ENCODE measurements at regions of chr11 and their contacts with region 1.

Region 1: GRCh38 chr11:72413914-72414628 is 20.3 kb downstream of the CLPB start:
- DNase-seq: peak; percentile 47 to 81 (median 75)
- ATAC-seq: peak; percentile 81
- H3K4me3 ChIP-seq: no peak overlapping the region
- H3K4me3 Mint-ChIP-seq: no peak overlapping the region
- H3K27ac ChIP-seq: no peak overlapping the region
- H3K27ac Mint-ChIP-seq: no peak overlapping the region
- H3K4me1 ChIP-seq: no peaks in the 10 kb centered on the region
- H3K4me1 Mint-ChIP-seq: peaks cover 28% of the 10 kb centered on the region
- H3K27me3 ChIP-seq: no peaks in the 10 kb centered on the region
- H3K27me3 Mint-ChIP-seq: no peaks in the 10 kb centered on the region
- CTCF ChIP-seq: peak; percentile 74

Region 2: DNA sequence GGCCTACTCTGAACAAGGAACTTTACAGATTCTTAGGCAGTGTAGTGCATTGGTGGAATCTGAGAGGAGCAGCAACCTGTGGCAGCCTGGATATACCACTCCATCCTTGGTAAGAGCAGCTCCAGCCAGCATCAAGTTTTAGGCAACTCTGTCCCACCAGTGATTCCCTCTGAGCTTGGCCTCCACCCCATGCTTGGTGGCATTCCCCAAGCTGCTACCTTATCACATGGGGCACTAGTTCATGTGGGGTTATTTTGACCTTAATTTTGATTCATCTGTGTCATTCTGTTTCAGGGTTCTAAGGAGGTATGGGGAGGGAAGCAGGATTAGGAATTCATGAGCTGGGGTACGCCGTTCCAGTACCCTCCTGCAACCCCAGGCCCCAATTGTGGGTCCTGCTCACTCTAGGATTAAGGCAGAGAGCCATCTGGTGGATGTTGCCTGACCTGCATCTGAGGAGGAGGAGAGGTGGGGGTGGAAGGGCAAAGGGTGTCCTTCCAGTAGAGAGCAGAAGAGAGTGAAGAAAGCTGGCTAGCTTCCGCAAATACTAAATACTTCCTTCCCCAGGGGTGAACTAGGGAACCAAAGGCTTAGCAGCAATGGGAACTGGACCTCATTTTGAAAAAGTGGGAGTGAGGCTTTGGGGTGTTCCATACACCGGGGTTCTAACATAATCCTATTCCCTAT is 322.9 kb before region 1 on chr11:
- CTCF ChIA-PET with region 1: no interaction called
- POLR2A ChIA-PET with region 1: no interaction called
- intact Hi-C with region 1: no loop called
- DNase-seq: peak; percentile 50 to 80 (median 73)
- ATAC-seq: peak; percentile 99
- H3K4me3 ChIP-seq: no peak overlapping the region
- H3K4me3 Mint-ChIP-seq: no peak overlapping the region
- H3K27ac ChIP-seq: no peak overlapping the region
- H3K27ac Mint-ChIP-seq: peak overlapping the region; percentile 70
- H3K4me1 ChIP-seq: no peaks in the 10 kb centered on the region
- H3K4me1 Mint-ChIP-seq: peaks cover 12% of the 10 kb centered on the region
- H3K27me3 ChIP-seq: no peaks in the 10 kb centered on the region
- H3K27me3 Mint-ChIP-seq: no peaks in the 10 kb centered on the region
- CTCF ChIP-seq: peak; percentile 74

Region 3: DNA sequence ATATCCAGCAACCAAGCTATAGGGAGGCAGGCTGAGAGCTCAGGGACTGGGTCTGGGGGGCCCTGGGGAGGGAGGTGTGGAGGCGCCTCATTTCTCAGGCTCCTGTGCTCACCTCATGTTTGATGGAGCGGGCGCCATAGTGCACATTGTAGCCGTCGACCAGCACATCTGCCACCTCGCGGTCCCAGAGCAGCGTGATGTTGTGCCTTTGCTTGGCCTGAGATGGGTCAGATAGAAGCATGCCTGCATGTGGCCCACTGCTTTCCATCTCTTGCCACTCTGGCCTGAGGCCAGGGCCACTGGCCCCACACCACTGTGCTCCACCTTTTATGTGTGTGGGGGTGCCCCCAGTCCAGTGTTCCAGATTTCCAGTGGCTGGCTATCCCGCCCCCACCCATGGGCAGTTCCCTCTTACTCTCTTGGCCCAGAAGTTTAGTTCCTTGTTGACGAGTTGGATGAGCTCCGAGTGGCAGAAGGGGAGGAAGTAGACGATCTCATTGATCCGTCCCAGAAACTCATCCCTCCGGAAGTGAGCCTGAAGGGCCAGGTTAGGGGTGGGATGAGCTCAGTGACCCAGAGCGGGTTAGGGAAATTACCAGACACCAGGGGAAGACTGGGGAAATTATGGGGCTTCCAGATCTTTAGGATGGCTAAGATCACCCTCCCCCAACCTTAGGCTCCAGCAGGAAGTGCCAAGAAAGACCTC is 120.0 kb before region 1 on chr11:
- CTCF ChIA-PET with region 1: interaction called, 8 read pairs
- POLR2A ChIA-PET with region 1: no interaction called
- intact Hi-C with region 1: loop called in 1 of 2 experiments (anchors 5 kb)
- DNase-seq: no peak
- ATAC-seq: no peak
- H3K4me3 ChIP-seq: no peak overlapping the region
- H3K4me3 Mint-ChIP-seq: no peak overlapping the region
- H3K27ac ChIP-seq: no peak overlapping the region
- H3K27ac Mint-ChIP-seq: no peak overlapping the region
- H3K4me1 ChIP-seq: no peaks in the 10 kb centered on the region
- H3K4me1 Mint-ChIP-seq: no peaks in the 10 kb centered on the region
- H3K27me3 ChIP-seq: no peaks in the 10 kb centered on the region
- H3K27me3 Mint-ChIP-seq: no peaks in the 10 kb centered on the region
- CTCF ChIP-seq: no peak

Region 4: GRCh38 chr11:72425053-72425980 is 11.2 kb after region 1 on chr11:
- CTCF ChIA-PET with region 1: interaction called, 26 read pairs
- POLR2A ChIA-PET with region 1: interaction called, 4 read pairs
- intact Hi-C with region 1: no loop called
- DNase-seq: no peak
- ATAC-seq: no peak
- H3K4me3 ChIP-seq: no peak overlapping the region
- H3K4me3 Mint-ChIP-seq: no peak overlapping the region
- H3K27ac ChIP-seq: no peak overlapping the region
- H3K27ac Mint-ChIP-seq: no peak overlapping the region
- H3K4me1 ChIP-seq: peaks cover 5% of the 10 kb centered on the region
- H3K4me1 Mint-ChIP-seq: peaks cover 18% of the 10 kb centered on the region
- H3K27me3 ChIP-seq: no peaks in the 10 kb centered on the region
- H3K27me3 Mint-ChIP-seq: no peaks in the 10 kb centered on the region
- CTCF ChIP-seq: no peak

Region 5: GRCh38 chr11:72807021-72807693 is 393.1 kb after region 1 on chr11:
- CTCF ChIA-PET with region 1: no interaction called
- POLR2A ChIA-PET with region 1: no interaction called
- intact Hi-C with region 1: no loop called
- DNase-seq: no peak
- ATAC-seq: no peak
- H3K4me3 ChIP-seq: no peak overlapping the region
- H3K4me3 Mint-ChIP-seq: no peak overlapping the region
- H3K27ac ChIP-seq: no peak overlapping the region
- H3K27ac Mint-ChIP-seq: no peak overlapping the region
- H3K4me1 ChIP-seq: no peaks in the 10 kb centered on the region
- H3K4me1 Mint-ChIP-seq: peaks cover 9% of the 10 kb centered on the region
- H3K27me3 ChIP-seq: no peaks in the 10 kb centered on the region
- H3K27me3 Mint-ChIP-seq: no peaks in the 10 kb centered on the region
- CTCF ChIP-seq: no peak

Region 6: GRCh38 chr11:73012121-73012863 is 598.2 kb after region 1 on chr11:
- CTCF ChIA-PET with region 1: no interaction called
- POLR2A ChIA-PET with region 1: no interaction called
- intact Hi-C with region 1: no loop called
- DNase-seq: no peak
- ATAC-seq: no peak
- H3K4me3 ChIP-seq: no peak overlapping the region
- H3K4me3 Mint-ChIP-seq: no peak overlapping the region
- H3K27ac ChIP-seq: no peak overlapping the region
- H3K27ac Mint-ChIP-seq: no peak overlapping the region
- H3K4me1 ChIP-seq: no peaks in the 10 kb centered on the region
- H3K4me1 Mint-ChIP-seq: peaks cover 2% of the 10 kb centered on the region
- H3K27me3 ChIP-seq: no peaks in the 10 kb centered on the region
- H3K27me3 Mint-ChIP-seq: no peaks in the 10 kb centered on the region
- CTCF ChIP-seq: no peak

Region 7: GRCh38 chr11:73366265-73366610 is 952.2 kb after region 1 on chr11:
- CTCF ChIA-PET with region 1: no interaction called
- POLR2A ChIA-PET with region 1: no interaction called
- intact Hi-C with region 1: no loop called
- DNase-seq: peak in 6 of 9 experiments; percentile 23 to 81 (median 58)
- ATAC-seq: peak; percentile 92
- H3K4me3 ChIP-seq: peak overlapping the region; percentile 18 to 27
- H3K4me3 Mint-ChIP-seq: peak overlapping the region; percentile 68
- H3K27ac ChIP-seq: peak overlapping the region; percentile 65 to 86
- H3K27ac Mint-ChIP-seq: peak overlapping the region; percentile 94
- H3K4me1 ChIP-seq: peaks cover 29% of the 10 kb centered on the region
- H3K4me1 Mint-ChIP-seq: peaks cover 35% of the 10 kb centered on the region
- H3K27me3 ChIP-seq: no peaks in the 10 kb centered on the region
- H3K27me3 Mint-ChIP-seq: no peaks in the 10 kb centered on the region
- CTCF ChIP-seq: no peak

Measured in CD8-positive, alpha-beta T cell (primary cell).